Heart right ventricle (tissue), 16 donors: ENCODE measurements at regions of chr11 and their contacts with region 1.

Region 1: GRCh38 chr11:40819230-40819629 is 640.2 kb downstream of the LRRC4C start:
- DNase-seq: no peak
- ATAC-seq: no peak
- H3K4me3 ChIP-seq: no peak overlapping the region
- H3K27ac ChIP-seq: no peak overlapping the region
- H3K4me1 ChIP-seq: no peaks in the 10 kb centered on the region
- H3K27me3 ChIP-seq: no peaks in the 10 kb centered on the region
- CTCF ChIP-seq: no peak

Region 2: DNA sequence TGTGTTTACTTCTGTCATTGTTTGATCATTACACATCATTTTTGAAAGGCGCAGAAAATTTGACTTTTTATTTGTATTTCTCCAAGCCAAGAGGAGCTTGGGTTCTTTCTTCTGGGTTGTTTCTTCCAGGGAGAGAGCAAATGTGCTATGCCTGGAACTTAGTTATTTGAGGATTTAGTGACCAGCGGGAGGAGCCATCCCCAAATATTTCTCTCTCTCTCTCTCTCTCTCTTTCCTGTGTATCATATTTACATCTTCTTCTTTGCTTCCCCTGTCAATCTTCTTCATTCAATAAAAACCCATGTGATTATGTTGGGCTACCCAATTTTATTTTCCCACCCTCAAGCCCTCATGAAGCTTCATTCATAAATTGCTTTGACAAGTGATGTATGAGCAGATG is 105.7 kb after region 1 on chr11:
- intact Hi-C with region 1: loop called in 1 of 10 experiments (anchors 2 kb)
- DNase-seq: no peak
- ATAC-seq: no peak
- H3K4me3 ChIP-seq: no peak overlapping the region
- H3K27ac ChIP-seq: no peak overlapping the region
- H3K4me1 ChIP-seq: no peaks in the 10 kb centered on the region
- H3K27me3 ChIP-seq: no peaks in the 10 kb centered on the region
- CTCF ChIP-seq: no peak